MCF 10A (cell line): ENCODE measurements at regions of chr3 and their contacts with region 1.

Region 1: DNA sequence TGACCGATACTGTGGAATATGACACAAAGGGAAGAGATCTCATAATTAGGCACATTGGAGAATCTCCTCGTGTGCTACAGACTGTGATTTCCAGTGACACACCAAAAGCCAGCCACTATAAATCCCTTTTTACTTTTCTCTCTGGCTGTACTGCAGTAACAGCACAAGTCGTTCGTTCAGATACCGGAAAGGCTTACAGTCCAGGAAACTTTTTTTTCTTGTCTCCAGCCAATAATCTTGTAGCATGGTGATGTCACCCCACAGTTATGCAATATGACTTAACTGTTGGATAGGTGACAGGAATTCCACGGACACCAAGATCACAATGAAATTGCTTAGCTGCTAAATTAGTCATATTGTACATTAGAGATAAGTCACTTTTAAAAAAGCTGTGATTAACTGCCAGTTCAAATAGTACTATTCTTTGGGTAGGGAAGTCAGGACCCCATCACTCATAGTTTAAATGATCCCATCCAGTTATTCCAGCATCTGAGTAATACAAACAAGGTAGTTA is 36.3 kb upstream of the TSC22D2 start:
- DNase-seq: peak; percentile 96
- H3K4me3 Mint-ChIP-seq: peak overlapping the region; percentile 74
- H3K27ac Mint-ChIP-seq: peak overlapping the region; percentile 79
- H3K4me1 Mint-ChIP-seq: peaks cover 44% of the 10 kb centered on the region
- H3K27me3 Mint-ChIP-seq: no peaks in the 10 kb centered on the region
- CTCF ChIP-seq: no peak

Region 2: GRCh38 chr3:149480325-149481017 is 891.3 kb before region 1 on chr3:
- CTCF ChIA-PET with region 1: no interaction called
- POLR2A ChIA-PET with region 1: no interaction called
- intact Hi-C with region 1: no loop called
- DNase-seq: peak; percentile 88
- H3K4me3 Mint-ChIP-seq: no peak overlapping the region
- H3K27ac Mint-ChIP-seq: no peak overlapping the region
- H3K4me1 Mint-ChIP-seq: no peaks in the 10 kb centered on the region
- H3K27me3 Mint-ChIP-seq: no peaks in the 10 kb centered on the region
- CTCF ChIP-seq: peak; percentile 88

Region 3: DNA sequence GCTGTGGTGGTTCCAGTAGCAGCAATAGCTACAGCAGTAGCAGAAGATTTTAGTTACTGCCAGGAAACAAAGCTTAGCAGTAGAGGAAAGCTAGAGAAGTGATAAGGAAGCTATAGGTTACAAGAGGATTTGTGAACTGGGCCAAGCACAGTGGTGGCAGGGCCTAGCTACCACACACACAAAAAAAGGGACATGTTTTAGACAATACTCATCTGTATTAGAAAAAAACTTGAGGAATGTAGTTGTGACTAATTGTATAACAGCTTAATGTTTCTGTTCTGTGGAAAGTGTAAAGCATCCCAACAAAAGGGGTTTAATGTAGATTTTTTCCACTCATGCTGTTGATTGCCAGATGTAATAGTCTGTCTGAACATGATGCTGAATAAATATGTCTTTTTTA is 371.2 kb before region 1 on chr3:
- CTCF ChIA-PET with region 1: no interaction called
- POLR2A ChIA-PET with region 1: no interaction called
- intact Hi-C with region 1: no loop called
- DNase-seq: no peak
- H3K4me3 Mint-ChIP-seq: no peak overlapping the region
- H3K27ac Mint-ChIP-seq: no peak overlapping the region
- H3K4me1 Mint-ChIP-seq: peaks cover 5% of the 10 kb centered on the region
- H3K27me3 Mint-ChIP-seq: no peaks in the 10 kb centered on the region
- CTCF ChIP-seq: no peak

Region 4: DNA sequence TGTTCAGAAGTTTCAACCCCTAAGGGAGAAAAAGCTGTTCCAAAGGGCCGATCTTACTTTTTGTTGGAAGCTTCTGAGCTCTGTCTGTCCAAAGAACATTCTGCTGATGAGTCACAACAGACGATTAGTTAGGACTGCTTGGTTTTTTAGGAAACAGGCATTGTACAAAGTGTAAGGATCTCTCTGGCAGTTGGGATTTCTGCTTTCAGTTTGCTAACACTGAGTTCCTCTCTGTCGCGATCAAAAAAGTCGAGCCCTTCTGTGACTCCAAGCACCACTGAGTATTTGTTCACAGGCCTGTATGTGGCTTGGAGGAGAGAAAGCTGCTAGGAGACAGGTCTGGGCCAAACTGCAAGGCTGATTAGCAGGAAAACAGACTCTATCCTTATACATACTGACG is 309.3 kb before region 1 on chr3:
- CTCF ChIA-PET with region 1: no interaction called
- POLR2A ChIA-PET with region 1: no interaction called
- intact Hi-C with region 1: no loop called
- DNase-seq: peak; percentile 35
- H3K4me3 Mint-ChIP-seq: peak overlapping the region; percentile 35
- H3K27ac Mint-ChIP-seq: peak overlapping the region; percentile 37
- H3K4me1 Mint-ChIP-seq: peaks cover 7% of the 10 kb centered on the region
- H3K27me3 Mint-ChIP-seq: peaks cover 16% of the 10 kb centered on the region
- CTCF ChIP-seq: no peak

Region 5: DNA sequence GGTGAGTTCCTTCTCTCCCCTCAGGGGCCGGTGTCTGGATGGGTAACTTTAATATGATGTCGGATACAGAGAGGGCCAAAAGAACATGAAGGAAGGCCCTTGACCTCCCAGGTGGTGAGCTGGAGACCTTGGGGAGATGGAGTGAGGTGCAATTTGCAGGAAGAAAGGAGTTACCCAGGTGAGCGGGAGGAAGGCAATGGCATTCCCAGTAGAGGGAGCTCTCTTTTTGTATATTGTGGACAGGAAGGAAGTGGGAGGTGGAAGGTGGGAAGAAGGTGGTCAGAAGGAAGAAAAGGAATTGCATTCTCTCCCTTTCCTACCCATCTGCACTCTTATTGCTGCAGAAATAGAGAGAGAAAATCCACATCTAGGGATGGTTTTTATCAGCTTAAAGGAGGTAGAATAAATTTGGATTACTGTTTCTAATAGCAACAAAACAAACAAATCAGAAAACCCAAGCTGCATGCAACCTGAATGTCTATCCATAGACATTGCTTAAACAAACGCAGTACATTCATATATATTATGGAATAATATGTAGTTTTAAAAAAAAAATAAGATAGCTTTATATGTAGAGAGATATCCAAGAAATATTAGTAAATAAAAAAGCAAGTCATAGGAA is 132.7 kb before region 1 on chr3:
- CTCF ChIA-PET with region 1: interaction called, 4 read pairs
- POLR2A ChIA-PET with region 1: no interaction called
- intact Hi-C with region 1: loop called (anchors 2 kb)
- DNase-seq: peak; percentile 60
- H3K4me3 Mint-ChIP-seq: no peak overlapping the region
- H3K27ac Mint-ChIP-seq: peak overlapping the region; percentile 83
- H3K4me1 Mint-ChIP-seq: peaks cover 27% of the 10 kb centered on the region
- H3K27me3 Mint-ChIP-seq: no peaks in the 10 kb centered on the region
- CTCF ChIP-seq: peak; percentile 32

Region 6: GRCh38 chr3:150286390-150287147 is 85.2 kb before region 1 on chr3:
- CTCF ChIA-PET with region 1: interaction called, 5 read pairs
- POLR2A ChIA-PET with region 1: interaction called, 4 read pairs
- intact Hi-C with region 1: loop called (anchors 1 kb)
- DNase-seq: peak; percentile 72
- H3K4me3 Mint-ChIP-seq: no peak overlapping the region
- H3K27ac Mint-ChIP-seq: peak overlapping the region; percentile 64
- H3K4me1 Mint-ChIP-seq: peaks cover 9% of the 10 kb centered on the region
- H3K27me3 Mint-ChIP-seq: no peaks in the 10 kb centered on the region
- CTCF ChIP-seq: peak; percentile 58

Region 7: GRCh38 chr3:150303776-150304175 is 68.0 kb before region 1 on chr3:
- CTCF ChIA-PET with region 1: no interaction called
- POLR2A ChIA-PET with region 1: no interaction called
- intact Hi-C with region 1: loop called (anchors 5 kb)
- DNase-seq: peak; percentile 39
- H3K4me3 Mint-ChIP-seq: no peak overlapping the region
- H3K27ac Mint-ChIP-seq: no peak overlapping the region
- H3K4me1 Mint-ChIP-seq: peaks cover 19% of the 10 kb centered on the region
- H3K27me3 Mint-ChIP-seq: no peaks in the 10 kb centered on the region
- CTCF ChIP-seq: peak; percentile 23

Region 8: GRCh38 chr3:150319904-150320303 is 51.9 kb before region 1 on chr3:
- CTCF ChIA-PET with region 1: interaction called, 3 read pairs
- POLR2A ChIA-PET with region 1: interaction called, 14 read pairs
- intact Hi-C with region 1: no loop called
- DNase-seq: peak; percentile 97
- H3K4me3 Mint-ChIP-seq: no peak overlapping the region
- H3K27ac Mint-ChIP-seq: no peak overlapping the region
- H3K4me1 Mint-ChIP-seq: peaks cover 22% of the 10 kb centered on the region
- H3K27me3 Mint-ChIP-seq: no peaks in the 10 kb centered on the region
- CTCF ChIP-seq: no peak

Region 9: DNA sequence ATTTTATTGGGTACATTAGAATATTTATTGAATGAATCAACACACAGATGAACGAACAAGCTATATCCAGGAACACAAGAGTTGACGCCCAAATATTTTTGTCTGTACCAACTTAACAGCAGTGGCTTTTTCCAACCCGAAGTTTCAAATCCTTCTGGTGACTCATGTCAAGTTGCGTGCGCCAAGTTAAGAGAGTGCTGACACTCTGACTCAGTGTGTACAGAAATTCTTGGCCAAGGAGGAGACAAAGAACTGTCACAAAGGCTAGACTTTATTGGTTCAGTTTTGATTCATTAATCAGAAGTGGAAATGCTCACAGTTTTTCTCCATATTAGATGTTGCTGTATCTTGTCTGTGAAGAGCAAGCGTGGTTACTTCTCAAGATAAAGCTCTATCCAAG is 23.3 kb before region 1 on chr3:
- CTCF ChIA-PET with region 1: interaction called, 6 read pairs
- POLR2A ChIA-PET with region 1: interaction called, 53 read pairs
- intact Hi-C with region 1: loop called (anchors 1 kb)
- DNase-seq: peak; percentile 93
- H3K4me3 Mint-ChIP-seq: peak overlapping the region; percentile 8
- H3K27ac Mint-ChIP-seq: peak overlapping the region; percentile 91
- H3K4me1 Mint-ChIP-seq: peaks cover 50% of the 10 kb centered on the region
- H3K27me3 Mint-ChIP-seq: no peaks in the 10 kb centered on the region
- CTCF ChIP-seq: no peak